IMR-90 (cell line): ENCODE measurements at regions of chr18 and their contacts with region 1.

Region 1: GRCh38 chr18:77101410-77102258 is 30.9 kb downstream of the MBP start:
- DNase-seq: peak; percentile 97
- ATAC-seq: peak; percentile 67
- H3K4me3 ChIP-seq: peak overlapping the region; percentile 3; the same call in 1 of the 2 replicates
- H3K27ac ChIP-seq: peak overlapping the region; percentile 81
- H3K4me1 ChIP-seq: peaks cover 42% of the 10 kb centered on the region
- H3K27me3 ChIP-seq: no peaks in the 10 kb centered on the region
- CTCF ChIP-seq: no peak
- POLR2A ChIP-seq: peak; percentile 41; the same call in 1 of the 2 replicates
- RAD21 ChIP-seq: peak; percentile 25; the same call in 1 of the 2 replicates

Region 2: DNA sequence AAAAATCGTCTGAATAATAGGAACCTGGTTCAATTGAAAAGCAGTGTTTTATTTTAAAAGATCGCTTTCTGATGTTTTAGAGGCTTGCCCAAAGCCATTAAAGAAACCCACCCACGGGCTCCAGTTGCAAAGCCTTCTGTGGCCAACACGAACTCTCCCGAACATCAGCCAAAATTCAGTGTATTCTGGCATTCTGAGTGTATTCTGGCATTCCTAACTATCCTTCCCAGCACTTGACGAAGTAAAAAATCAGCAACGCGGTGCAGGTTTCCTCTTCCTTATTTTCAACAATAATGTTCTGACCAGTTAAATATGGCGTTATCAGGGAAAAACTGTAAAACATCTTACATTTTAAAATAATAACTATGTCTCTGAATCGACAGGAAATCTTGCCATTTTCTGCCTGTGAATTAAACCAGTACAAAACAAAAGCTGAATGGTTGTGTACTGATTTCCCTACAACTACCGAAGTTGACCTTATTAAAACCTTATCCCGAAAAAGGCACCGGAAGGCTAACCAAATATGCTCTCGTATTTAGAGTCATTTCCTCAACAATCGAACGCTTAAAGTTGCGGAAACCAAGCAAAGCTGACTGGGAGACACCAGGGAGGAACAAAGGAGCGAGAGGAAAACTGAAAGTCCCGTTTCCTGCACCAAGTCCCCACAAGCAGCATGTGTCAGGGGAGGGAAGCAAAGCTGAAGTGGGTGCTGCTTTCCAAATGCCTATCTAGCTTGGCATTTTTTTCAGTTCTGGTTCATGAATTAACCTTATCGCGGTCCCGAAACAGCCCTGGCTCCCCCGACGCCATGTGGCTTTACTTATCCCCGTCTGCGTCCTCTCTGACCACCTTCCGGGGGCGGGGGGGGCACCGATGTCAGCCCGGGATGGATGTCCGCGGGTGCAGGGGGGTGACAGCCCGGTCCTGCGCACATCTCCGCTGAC is 650.9 kb before region 1 on chr18:
- CTCF ChIA-PET with region 1: no interaction called
- POLR2A ChIA-PET with region 1: no interaction called
- dilution Hi-C with region 1: no loop called
- in situ Hi-C with region 1: loop called (anchors 25 kb)
- intact Hi-C with region 1: no loop called
- DNase-seq: peak; percentile 72
- ATAC-seq: peak; percentile 61
- H3K4me3 ChIP-seq: peak overlapping the region; percentile 49
- H3K27ac ChIP-seq: peak overlapping the region; percentile 83
- H3K4me1 ChIP-seq: peaks cover 43% of the 10 kb centered on the region
- H3K27me3 ChIP-seq: no peaks in the 10 kb centered on the region
- CTCF ChIP-seq: no peak
- POLR2A ChIP-seq: peak; percentile 66
- RAD21 ChIP-seq: no peak

Region 3: GRCh38 chr18:76838182-76838581 is 263.5 kb before region 1 on chr18:
- CTCF ChIA-PET with region 1: no interaction called
- POLR2A ChIA-PET with region 1: no interaction called
- dilution Hi-C with region 1: no loop called
- in situ Hi-C with region 1: no loop called
- intact Hi-C with region 1: loop called (anchors 10 kb)
- DNase-seq: peak; percentile 57
- ATAC-seq: peak; percentile 77
- H3K4me3 ChIP-seq: no peak overlapping the region
- H3K27ac ChIP-seq: no peak overlapping the region
- H3K4me1 ChIP-seq: peaks cover 11% of the 10 kb centered on the region
- H3K27me3 ChIP-seq: no peaks in the 10 kb centered on the region
- CTCF ChIP-seq: no peak
- POLR2A ChIP-seq: no peak
- RAD21 ChIP-seq: no peak

Region 4: GRCh38 chr18:77067291-77068061 is 34.2 kb before region 1 on chr18:
- CTCF ChIA-PET with region 1: interaction called, 3 read pairs
- POLR2A ChIA-PET with region 1: interaction called, 4 read pairs
- dilution Hi-C with region 1: no loop called
- in situ Hi-C with region 1: no loop called
- intact Hi-C with region 1: loop called (anchors 2 kb)
- DNase-seq: peak; percentile 96
- ATAC-seq: peak; percentile 73
- H3K4me3 ChIP-seq: no peak overlapping the region
- H3K27ac ChIP-seq: peak overlapping the region; percentile 64
- H3K4me1 ChIP-seq: peaks cover 46% of the 10 kb centered on the region
- H3K27me3 ChIP-seq: no peaks in the 10 kb centered on the region
- CTCF ChIP-seq: peak; percentile 1; the same call in 1 of the 2 replicates
- POLR2A ChIP-seq: no peak
- RAD21 ChIP-seq: no peak; the same call in 1 of the 2 replicates

Region 5: GRCh38 chr18:77087393-77088141 is 14.1 kb before region 1 on chr18:
- CTCF ChIA-PET with region 1: no interaction called
- POLR2A ChIA-PET with region 1: no interaction called
- dilution Hi-C with region 1: no loop called
- in situ Hi-C with region 1: no loop called
- intact Hi-C with region 1: loop called (anchors 2 kb)
- DNase-seq: no peak
- ATAC-seq: peak; percentile 79
- H3K4me3 ChIP-seq: no peak overlapping the region; the same call in 1 of the 2 replicates
- H3K27ac ChIP-seq: no peak overlapping the region
- H3K4me1 ChIP-seq: peaks cover 8% of the 10 kb centered on the region; the same call in 1 of the 2 replicates
- H3K27me3 ChIP-seq: no peaks in the 10 kb centered on the region
- CTCF ChIP-seq: no peak
- POLR2A ChIP-seq: no peak
- RAD21 ChIP-seq: no peak

Region 6: GRCh38 chr18:77127769-77128671 is 26.4 kb after region 1 on chr18:
- CTCF ChIA-PET with region 1: interaction called, 3 read pairs
- POLR2A ChIA-PET with region 1: no interaction called
- dilution Hi-C with region 1: no loop called
- in situ Hi-C with region 1: no loop called
- intact Hi-C with region 1: loop called (anchors 2 kb)
- DNase-seq: peak; percentile 89
- ATAC-seq: peak; percentile 68
- H3K4me3 ChIP-seq: no peak overlapping the region
- H3K27ac ChIP-seq: peak overlapping the region; percentile 51; the same call in 1 of the 2 replicates
- H3K4me1 ChIP-seq: peaks cover 20% of the 10 kb centered on the region
- H3K27me3 ChIP-seq: peaks cover 14% of the 10 kb centered on the region
- CTCF ChIP-seq: no peak
- POLR2A ChIP-seq: no peak
- RAD21 ChIP-seq: no peak

Region 7: GRCh38 chr18:77804382-77804781 is 702.7 kb after region 1 on chr18:
- CTCF ChIA-PET with region 1: no interaction called
- POLR2A ChIA-PET with region 1: no interaction called
- dilution Hi-C with region 1: no loop called
- in situ Hi-C with region 1: no loop called
- intact Hi-C with region 1: no loop called
- DNase-seq: no peak
- ATAC-seq: no peak
- H3K4me3 ChIP-seq: no peak overlapping the region
- H3K27ac ChIP-seq: no peak overlapping the region
- H3K4me1 ChIP-seq: no peaks in the 10 kb centered on the region
- H3K27me3 ChIP-seq: no peaks in the 10 kb centered on the region
- CTCF ChIP-seq: no peak
- POLR2A ChIP-seq: no peak
- RAD21 ChIP-seq: no peak

Region 8: DNA sequence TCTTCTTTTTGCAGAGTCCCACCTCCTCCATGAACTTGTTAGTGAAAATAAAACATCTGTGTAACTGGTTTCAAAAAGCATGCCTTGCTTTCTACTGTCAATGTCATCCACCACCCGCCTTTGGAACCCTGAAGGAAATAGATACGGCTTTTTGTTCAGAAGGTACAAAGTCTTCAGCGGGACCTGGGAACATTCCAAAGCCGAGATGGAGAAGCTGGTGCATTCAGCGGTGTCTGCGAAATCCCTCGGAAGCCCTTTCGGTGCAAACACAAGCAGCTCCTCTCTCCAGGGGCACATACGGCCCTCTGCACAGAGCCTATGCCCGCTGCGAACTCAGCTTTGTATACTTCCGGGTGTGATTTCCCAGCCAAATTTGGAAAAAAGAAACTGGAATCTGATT is 1322.2 kb after region 1 on chr18:
- CTCF ChIA-PET with region 1: no interaction called
- POLR2A ChIA-PET with region 1: no interaction called
- dilution Hi-C with region 1: no loop called
- in situ Hi-C with region 1: no loop called
- intact Hi-C with region 1: no loop called
- DNase-seq: no peak
- ATAC-seq: no peak
- H3K4me3 ChIP-seq: no peak overlapping the region
- H3K27ac ChIP-seq: no peak overlapping the region
- H3K4me1 ChIP-seq: no peaks in the 10 kb centered on the region
- H3K27me3 ChIP-seq: no peaks in the 10 kb centered on the region
- CTCF ChIP-seq: no peak
- POLR2A ChIP-seq: no peak
- RAD21 ChIP-seq: no peak